Activated CD8-positive, alpha-beta T cell treated with anti-CD3 and anti-CD28 coated beads, Interleukin-2, amount 10 ng/mL, durations not matched to agents 7 days and 5 days (primary cell): ENCODE measurements at regions of chr12 and their contacts with region 1.

Region 1: GRCh38 chr12:6434205-6435140 is 10.3 kb upstream of the CD27 start:
- DNase-seq: peak; percentile 62
- ATAC-seq: peak; percentile 87
- H3K4me3 Mint-ChIP-seq: peak overlapping the region; percentile 50
- H3K27ac Mint-ChIP-seq: peak overlapping the region; percentile 91
- H3K4me1 Mint-ChIP-seq: peaks cover 54% of the 10 kb centered on the region
- H3K27me3 Mint-ChIP-seq: no peaks in the 10 kb centered on the region

Region 2: GRCh38 chr12:6367065-6367968 is 67.2 kb before region 1 on chr12:
- CTCF ChIA-PET with region 1: no interaction called
- POLR2A ChIA-PET with region 1: no interaction called
- DNase-seq: peak; percentile 66
- ATAC-seq: peak; percentile 62
- H3K4me3 Mint-ChIP-seq: no peak overlapping the region
- H3K27ac Mint-ChIP-seq: peak overlapping the region; percentile 71
- H3K4me1 Mint-ChIP-seq: peaks cover 48% of the 10 kb centered on the region
- H3K27me3 Mint-ChIP-seq: no peaks in the 10 kb centered on the region

Region 3: DNA sequence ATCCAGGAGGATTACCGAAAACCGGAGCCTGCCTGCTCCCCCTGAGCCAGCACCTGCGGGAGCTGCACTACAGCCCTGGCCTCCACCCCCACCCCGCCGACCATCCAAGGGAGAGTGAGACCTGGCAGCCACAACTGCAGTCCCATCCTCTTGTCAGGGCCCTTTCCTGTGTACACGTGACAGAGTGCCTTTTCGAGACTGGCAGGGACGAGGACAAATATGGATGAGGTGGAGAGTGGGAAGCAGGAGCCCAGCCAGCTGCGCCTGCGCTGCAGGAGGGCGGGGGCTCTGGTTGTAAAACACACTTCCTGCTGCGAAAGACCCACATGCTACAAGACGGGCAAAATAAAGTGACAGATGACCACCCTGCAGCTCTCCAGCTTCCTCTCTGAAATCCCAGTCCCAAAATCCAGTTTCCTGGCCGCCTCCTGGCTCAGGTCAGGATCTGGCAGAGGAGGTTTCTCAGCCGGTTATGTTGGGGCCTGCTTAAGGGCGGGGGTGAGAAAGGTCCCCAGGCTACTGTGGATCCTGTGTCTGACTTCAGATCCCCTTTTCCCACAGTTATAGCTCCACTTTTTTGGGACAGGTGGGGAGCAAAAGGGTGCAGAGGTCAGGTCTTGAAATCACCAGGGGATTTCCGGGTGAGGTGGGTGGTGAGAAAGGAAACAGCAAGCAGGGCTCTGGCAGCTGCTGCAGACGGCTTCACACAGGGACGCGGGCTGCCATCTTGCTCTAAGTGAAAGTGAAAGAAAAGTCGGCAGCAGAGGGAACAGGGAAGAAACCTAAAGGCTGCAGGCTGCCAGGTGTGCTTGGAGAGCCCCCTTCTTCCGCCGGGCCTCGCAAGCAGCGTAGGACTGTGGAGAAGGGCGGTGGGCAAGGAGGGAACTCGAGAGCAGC is 17.1 kb after region 1 on chr12 and contains the start of gene TAPBPL:
- CTCF ChIA-PET with region 1: interaction called, 6 read pairs
- POLR2A ChIA-PET with region 1: interaction called, 47 read pairs
- DNase-seq: peak; percentile 88
- ATAC-seq: peak; percentile 85
- H3K4me3 Mint-ChIP-seq: peak within 1 kb of the TSS; percentile 99
- H3K27ac Mint-ChIP-seq: peak within 1 kb of the TSS; percentile 99
- H3K4me1 Mint-ChIP-seq: peaks cover 78% of the 10 kb centered on the region
- H3K27me3 Mint-ChIP-seq: no peaks in the 10 kb centered on the region
- total RNA-seq, gene TAPBPL: 31.2 to 32.5 TPM